ENCODE measurements at regions of chr5 and their contacts with region 1.

Region 1: DNA sequence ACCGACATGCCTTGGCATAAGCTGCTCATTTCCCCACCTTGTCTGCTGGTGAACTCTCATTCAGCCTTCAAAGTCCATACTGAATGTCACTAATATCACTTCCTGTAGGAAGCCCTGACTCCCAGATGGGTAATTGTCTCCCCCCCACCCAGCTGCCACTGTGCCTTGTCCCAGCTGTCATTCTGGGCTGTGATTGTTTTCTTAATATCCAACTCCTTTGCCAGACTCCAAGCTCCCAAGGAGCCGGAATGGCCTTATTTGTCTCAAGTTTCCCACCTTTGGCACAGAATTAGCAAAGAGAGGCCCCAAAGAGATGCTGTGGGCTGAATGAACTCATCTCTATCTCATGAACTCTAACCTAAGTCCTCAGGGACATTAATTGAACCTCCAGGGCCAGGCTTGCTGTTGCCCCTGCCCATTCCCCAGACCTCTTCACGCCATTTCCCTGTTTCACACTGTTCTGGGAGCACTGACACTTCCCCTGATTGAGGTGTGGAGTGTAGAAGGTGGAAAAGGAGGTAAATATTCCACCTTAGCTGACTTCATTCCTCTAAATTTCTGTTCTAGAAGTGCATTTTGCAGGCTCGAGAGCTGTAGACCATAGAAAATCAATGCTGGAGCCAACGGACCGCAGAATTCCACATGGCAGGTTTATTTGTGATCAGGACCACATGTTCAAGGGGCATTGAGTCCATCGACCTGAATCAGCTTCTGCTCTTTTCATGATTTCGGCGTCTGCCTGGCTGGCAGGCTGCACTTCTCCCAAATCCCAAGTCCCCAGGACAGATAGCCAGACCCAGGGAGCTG is 4.9 kb upstream of the SH3PXD2B start:
- DNase-seq: no peak
- ATAC-seq: no peak
- H3K4me3 Mint-ChIP-seq: no peak overlapping the region
- H3K27ac Mint-ChIP-seq: no peak overlapping the region
- H3K4me1 Mint-ChIP-seq: peaks cover 36% of the 10 kb centered on the region
- H3K27me3 Mint-ChIP-seq: peaks cover 32% of the 10 kb centered on the region
- CTCF ChIP-seq: no peak

Region 2: GRCh38 chr5:172473427-172473826 is 14.2 kb after region 1 on chr5:
- CTCF ChIA-PET with region 1: interaction called, 16 read pairs
- POLR2A ChIA-PET with region 1: no interaction called
- DNase-seq: no peak
- ATAC-seq: no peak
- H3K4me3 Mint-ChIP-seq: no peak overlapping the region
- H3K27ac Mint-ChIP-seq: no peak overlapping the region
- H3K4me1 Mint-ChIP-seq: no peaks in the 10 kb centered on the region
- H3K27me3 Mint-ChIP-seq: peaks cover 24% of the 10 kb centered on the region
- CTCF ChIP-seq: no peak

Region 3: GRCh38 chr5:172486451-172486850 is 27.3 kb after region 1 on chr5:
- CTCF ChIA-PET with region 1: no interaction called
- POLR2A ChIA-PET with region 1: no interaction called
- DNase-seq: no peak
- ATAC-seq: no peak
- H3K4me3 Mint-ChIP-seq: no peak overlapping the region
- H3K27ac Mint-ChIP-seq: no peak overlapping the region
- H3K4me1 Mint-ChIP-seq: no peaks in the 10 kb centered on the region
- H3K27me3 Mint-ChIP-seq: peaks cover 7% of the 10 kb centered on the region
- CTCF ChIP-seq: no peak

Region 4: GRCh38 chr5:172637122-172637580 is 178.0 kb after region 1 on chr5:
- CTCF ChIA-PET with region 1: interaction called, 13 read pairs
- POLR2A ChIA-PET with region 1: no interaction called
- DNase-seq: no peak
- ATAC-seq: no peak
- H3K4me3 Mint-ChIP-seq: no peak overlapping the region
- H3K27ac Mint-ChIP-seq: no peak overlapping the region
- H3K4me1 Mint-ChIP-seq: peaks cover 33% of the 10 kb centered on the region
- H3K27me3 Mint-ChIP-seq: peaks cover 26% of the 10 kb centered on the region
- CTCF ChIP-seq: no peak

Region 5: GRCh38 chr5:172697123-172698121 is 238.2 kb after region 1 on chr5:
- CTCF ChIA-PET with region 1: interaction called, 23 read pairs
- POLR2A ChIA-PET with region 1: no interaction called
- DNase-seq: peak; percentile 89
- ATAC-seq: peak; percentile 60
- H3K4me3 Mint-ChIP-seq: peak overlapping the region; percentile 66
- H3K27ac Mint-ChIP-seq: no peak overlapping the region
- H3K4me1 Mint-ChIP-seq: peaks cover 47% of the 10 kb centered on the region
- H3K27me3 Mint-ChIP-seq: peaks cover 32% of the 10 kb centered on the region
- CTCF ChIP-seq: peak; percentile 85

Measured in WTC11 (cell line).